Activated naive CD4-positive, alpha-beta T cell treated with anti-CD3 and anti-CD28 coated beads for 36 hours (primary cell): ENCODE measurements at regions of chr5 and their contacts with region 1.

Region 1: GRCh38 chr5:66757188-66757833 is 161.1 kb downstream of the MAST4 start:
- DNase-seq: peak; percentile 73
- H3K4me3 Mint-ChIP-seq: no peak overlapping the region
- H3K27ac Mint-ChIP-seq: no peak overlapping the region
- H3K4me1 Mint-ChIP-seq: no peaks in the 10 kb centered on the region
- H3K27me3 Mint-ChIP-seq: peaks cover 3% of the 10 kb centered on the region

Region 2: DNA sequence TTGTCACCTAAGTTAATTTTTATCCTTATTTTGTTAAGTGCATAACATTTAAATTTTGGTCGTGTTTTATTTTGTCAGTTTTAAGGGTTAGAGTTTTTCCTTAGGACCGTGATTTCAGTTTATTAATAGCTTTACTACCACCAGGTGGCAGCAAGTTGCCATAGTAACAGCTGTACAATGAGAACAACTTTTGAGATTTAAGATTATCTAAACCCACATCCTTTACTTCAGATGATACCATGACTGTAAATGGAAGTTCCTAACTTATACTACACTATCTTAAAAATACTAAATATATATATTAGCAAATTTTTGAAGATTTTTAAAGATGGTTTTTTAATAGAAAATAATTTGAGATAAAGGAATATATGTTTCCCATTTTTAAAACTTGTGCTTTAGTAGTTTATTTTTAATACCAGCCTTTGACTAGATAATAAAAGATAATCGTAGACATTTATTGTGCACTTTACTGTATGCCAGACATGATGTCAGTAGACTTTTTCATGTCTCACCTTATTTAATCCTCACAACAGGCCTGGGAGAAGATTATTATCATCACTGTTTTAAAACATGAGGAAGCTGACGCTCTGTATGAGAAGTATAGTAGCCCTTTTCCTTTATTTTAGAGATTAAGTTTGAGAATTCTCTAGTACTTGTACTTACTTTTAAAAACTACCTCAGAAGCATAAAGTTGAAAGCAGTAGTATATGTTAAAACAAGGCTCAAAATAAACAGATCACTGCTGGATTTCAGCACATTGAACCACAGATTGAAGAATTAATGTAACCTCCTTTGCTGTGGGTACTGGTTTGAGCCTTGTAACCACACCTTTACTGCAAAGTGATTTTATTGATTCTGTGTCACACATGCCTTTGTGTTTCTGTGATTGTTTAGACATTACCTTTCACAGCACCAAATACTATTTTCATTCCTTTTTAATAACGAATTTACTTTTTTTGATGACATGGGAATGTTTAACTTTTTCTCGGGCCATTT is 585.7 kb before region 1 on chr5:
- CTCF ChIA-PET with region 1: no interaction called
- intact Hi-C with region 1: loop called (anchors 1 kb)
- DNase-seq: peak; percentile 71
- H3K4me3 Mint-ChIP-seq: no peak overlapping the region
- H3K27ac Mint-ChIP-seq: no peak overlapping the region
- H3K4me1 Mint-ChIP-seq: peaks cover 30% of the 10 kb centered on the region
- H3K27me3 Mint-ChIP-seq: no peaks in the 10 kb centered on the region

Region 3: GRCh38 chr5:66239034-66239433 is 518.3 kb before region 1 on chr5:
- CTCF ChIA-PET with region 1: no interaction called
- intact Hi-C with region 1: loop called (anchors 5 kb)
- DNase-seq: peak; percentile 11
- H3K4me3 Mint-ChIP-seq: no peak overlapping the region
- H3K27ac Mint-ChIP-seq: no peak overlapping the region
- H3K4me1 Mint-ChIP-seq: no peaks in the 10 kb centered on the region
- H3K27me3 Mint-ChIP-seq: peaks cover 8% of the 10 kb centered on the region

Region 4: GRCh38 chr5:66529182-66529581 is 228.1 kb before region 1 on chr5:
- CTCF ChIA-PET with region 1: no interaction called
- intact Hi-C with region 1: loop called (anchors 1 kb)
- DNase-seq: peak; percentile 48
- H3K4me3 Mint-ChIP-seq: no peak overlapping the region
- H3K27ac Mint-ChIP-seq: no peak overlapping the region
- H3K4me1 Mint-ChIP-seq: no peaks in the 10 kb centered on the region
- H3K27me3 Mint-ChIP-seq: peaks cover 41% of the 10 kb centered on the region